ENCODE measurements at regions of chr13 and their contacts with region 1.

Region 1: GRCh38 chr13:52617070-52618060 is 24.9 kb upstream of the HNRNPA1L2 start:
- DNase-seq: peak; percentile 73 to 90 (median 81)
- ATAC-seq: peak; percentile 93
- H3K4me3 ChIP-seq: peak overlapping the region; percentile 81
- H3K4me3 Mint-ChIP-seq: peak overlapping the region; percentile 96
- H3K27ac ChIP-seq: peak overlapping the region; percentile 55 to 76
- H3K27ac Mint-ChIP-seq: peak overlapping the region; percentile 86
- H3K4me1 ChIP-seq: peaks cover 28% of the 10 kb centered on the region
- H3K4me1 Mint-ChIP-seq: peaks cover 42% of the 10 kb centered on the region
- H3K27me3 ChIP-seq: no peaks in the 10 kb centered on the region
- H3K27me3 Mint-ChIP-seq: no peaks in the 10 kb centered on the region
- CTCF ChIP-seq: no peak

Region 2: DNA sequence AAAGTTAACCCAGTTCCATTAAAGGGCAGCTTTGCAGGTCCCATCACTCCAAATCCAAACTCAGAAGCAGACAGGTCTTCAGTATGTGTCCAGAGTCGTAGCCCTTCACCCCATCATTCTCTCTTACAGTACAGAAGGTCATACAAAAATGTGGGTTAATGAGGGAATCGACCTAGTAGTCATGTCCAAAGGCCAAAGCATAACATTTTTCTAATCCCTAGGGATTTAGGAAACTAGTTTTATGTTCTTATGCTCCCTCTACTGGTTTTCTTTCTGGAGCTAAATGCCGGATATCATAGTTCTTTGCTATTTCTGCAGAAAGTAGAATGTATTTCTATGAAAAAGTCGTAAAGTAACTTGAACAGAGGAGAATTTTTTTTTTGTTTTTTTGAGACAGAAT is 885.6 kb before region 1 on chr13:
- CTCF ChIA-PET with region 1: no interaction called
- POLR2A ChIA-PET with region 1: no interaction called
- intact Hi-C with region 1: no loop called
- DNase-seq: no peak
- ATAC-seq: no peak
- H3K4me3 ChIP-seq: no peak overlapping the region
- H3K4me3 Mint-ChIP-seq: no peak overlapping the region
- H3K27ac ChIP-seq: no peak overlapping the region
- H3K27ac Mint-ChIP-seq: no peak overlapping the region
- H3K4me1 ChIP-seq: peaks cover 11% of the 10 kb centered on the region
- H3K4me1 Mint-ChIP-seq: peaks cover 11% of the 10 kb centered on the region
- H3K27me3 ChIP-seq: no peaks in the 10 kb centered on the region
- H3K27me3 Mint-ChIP-seq: no peaks in the 10 kb centered on the region
- CTCF ChIP-seq: no peak

Region 3: GRCh38 chr13:51959773-51960172 is 657.6 kb before region 1 on chr13:
- CTCF ChIA-PET with region 1: no interaction called
- POLR2A ChIA-PET with region 1: no interaction called
- intact Hi-C with region 1: no loop called
- DNase-seq: no peak
- ATAC-seq: no peak
- H3K4me3 ChIP-seq: no peak overlapping the region
- H3K4me3 Mint-ChIP-seq: no peak overlapping the region
- H3K27ac ChIP-seq: no peak overlapping the region
- H3K27ac Mint-ChIP-seq: no peak overlapping the region
- H3K4me1 ChIP-seq: peaks cover 21% of the 10 kb centered on the region
- H3K4me1 Mint-ChIP-seq: peaks cover 6% of the 10 kb centered on the region
- H3K27me3 ChIP-seq: no peaks in the 10 kb centered on the region
- H3K27me3 Mint-ChIP-seq: no peaks in the 10 kb centered on the region
- CTCF ChIP-seq: no peak

Region 4: DNA sequence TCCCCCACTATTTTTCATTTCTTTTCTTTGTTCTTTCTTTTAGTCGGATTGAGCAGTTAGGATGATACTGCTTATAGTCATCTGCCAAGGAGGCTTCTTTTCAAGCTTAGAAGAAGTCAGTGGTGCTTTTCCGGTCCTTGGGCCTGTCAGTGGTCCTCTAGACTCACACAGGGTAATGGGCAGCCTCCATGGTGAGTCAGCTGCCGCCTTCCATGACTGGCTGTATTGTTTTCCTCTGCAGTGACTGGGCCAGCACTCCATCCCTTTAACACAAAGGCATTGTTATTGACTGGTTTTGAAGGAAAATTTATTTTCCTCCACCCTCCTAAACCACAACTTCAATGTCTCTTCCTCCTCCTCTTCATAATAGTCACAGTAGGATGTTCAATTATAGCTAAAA is 169.4 kb after region 1 on chr13:
- CTCF ChIA-PET with region 1: no interaction called
- POLR2A ChIA-PET with region 1: no interaction called
- intact Hi-C with region 1: no loop called
- DNase-seq: no peak
- ATAC-seq: no peak
- H3K4me3 ChIP-seq: no peak overlapping the region
- H3K4me3 Mint-ChIP-seq: no peak overlapping the region
- H3K27ac ChIP-seq: no peak overlapping the region
- H3K27ac Mint-ChIP-seq: no peak overlapping the region
- H3K4me1 ChIP-seq: no peaks in the 10 kb centered on the region
- H3K4me1 Mint-ChIP-seq: no peaks in the 10 kb centered on the region
- H3K27me3 ChIP-seq: peaks cover 0 to 2% of the 10 kb centered on the region in 2 experiments
- H3K27me3 Mint-ChIP-seq: no peaks in the 10 kb centered on the region
- CTCF ChIP-seq: no peak

Region 5: DNA sequence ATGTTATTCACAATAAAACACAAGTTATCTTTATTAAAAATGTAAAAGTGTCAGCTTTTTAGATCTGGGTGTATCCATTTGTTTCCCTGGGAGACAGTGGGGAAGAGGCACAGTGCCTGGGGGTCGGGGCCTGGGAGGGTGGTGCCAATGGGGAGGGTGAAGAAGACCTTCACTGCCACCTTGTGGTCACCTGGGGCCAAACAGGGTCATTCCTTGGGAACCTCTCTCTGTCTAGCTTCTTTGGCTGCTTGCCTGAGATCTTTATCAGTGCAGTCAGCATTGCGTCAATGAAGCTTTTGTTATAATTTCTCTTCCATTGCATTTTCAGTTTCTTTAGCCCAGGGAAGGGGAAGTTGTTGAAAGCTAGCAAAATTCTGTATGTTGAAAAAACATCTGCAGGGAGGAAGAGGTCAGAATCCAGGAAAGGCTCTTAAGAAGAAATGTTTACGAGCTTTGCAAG is 192.0 kb after region 1 on chr13:
- CTCF ChIA-PET with region 1: no interaction called
- POLR2A ChIA-PET with region 1: no interaction called
- intact Hi-C with region 1: loop called in 1 of 2 experiments (anchors 5 kb)
- DNase-seq: peak in 6 of 14 experiments; percentile 6 to 53 (median 30)
- ATAC-seq: no peak
- H3K4me3 ChIP-seq: no peak overlapping the region
- H3K4me3 Mint-ChIP-seq: no peak overlapping the region
- H3K27ac ChIP-seq: no peak overlapping the region
- H3K27ac Mint-ChIP-seq: no peak overlapping the region
- H3K4me1 ChIP-seq: no peaks in the 10 kb centered on the region
- H3K4me1 Mint-ChIP-seq: peaks cover 4% of the 10 kb centered on the region
- H3K27me3 ChIP-seq: peaks cover 0 to 8% of the 10 kb centered on the region in 2 experiments
- H3K27me3 Mint-ChIP-seq: peaks cover 31% of the 10 kb centered on the region
- CTCF ChIP-seq: peak; percentile 17